PC-9 (cell line): ENCODE measurements at regions of chr12 and their contacts with region 1.

Region 1: GRCh38 chr12:80001264-80001961 is 66.5 kb upstream of the PPP1R12A start:
- DNase-seq: peak; percentile 64 to 66
- H3K4me3 ChIP-seq: 0 out of 2 replicates have a peak overlapping the region, but pooled peaks have one; percentile 4
- H3K27ac ChIP-seq: no peak overlapping the region
- H3K4me1 ChIP-seq: peaks cover 21% of the 10 kb centered on the region
- H3K27me3 ChIP-seq: no peaks in the 10 kb centered on the region
- CTCF ChIP-seq: no peak

Region 2: DNA sequence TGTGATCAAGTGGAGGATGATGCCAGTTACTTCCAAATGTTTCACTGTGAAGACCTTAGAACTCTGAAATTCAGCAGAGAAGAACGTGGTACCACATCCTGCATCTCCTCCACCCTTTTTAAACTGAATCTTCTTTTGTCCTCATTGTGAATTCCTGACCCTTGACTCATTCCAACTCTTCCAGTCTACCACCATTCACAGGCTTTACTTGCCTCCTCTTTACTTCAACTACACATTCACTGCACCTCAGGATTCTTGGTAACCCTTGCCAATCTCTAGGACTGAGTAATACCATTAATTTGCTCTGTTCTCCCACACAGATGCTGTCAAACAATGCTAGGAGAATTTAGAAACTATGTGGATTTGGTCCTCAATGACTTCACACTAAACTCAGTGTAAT is 103.8 kb before region 1 on chr12:
- CTCF ChIA-PET with region 1: no interaction called
- POLR2A ChIA-PET with region 1: no interaction called
- intact Hi-C with region 1: no loop called
- DNase-seq: peak; percentile 18 to 35
- H3K4me3 ChIP-seq: no peak overlapping the region
- H3K27ac ChIP-seq: no peak overlapping the region
- H3K4me1 ChIP-seq: no peaks in the 10 kb centered on the region
- H3K27me3 ChIP-seq: no peaks in the 10 kb centered on the region
- CTCF ChIP-seq: no peak

Region 3: DNA sequence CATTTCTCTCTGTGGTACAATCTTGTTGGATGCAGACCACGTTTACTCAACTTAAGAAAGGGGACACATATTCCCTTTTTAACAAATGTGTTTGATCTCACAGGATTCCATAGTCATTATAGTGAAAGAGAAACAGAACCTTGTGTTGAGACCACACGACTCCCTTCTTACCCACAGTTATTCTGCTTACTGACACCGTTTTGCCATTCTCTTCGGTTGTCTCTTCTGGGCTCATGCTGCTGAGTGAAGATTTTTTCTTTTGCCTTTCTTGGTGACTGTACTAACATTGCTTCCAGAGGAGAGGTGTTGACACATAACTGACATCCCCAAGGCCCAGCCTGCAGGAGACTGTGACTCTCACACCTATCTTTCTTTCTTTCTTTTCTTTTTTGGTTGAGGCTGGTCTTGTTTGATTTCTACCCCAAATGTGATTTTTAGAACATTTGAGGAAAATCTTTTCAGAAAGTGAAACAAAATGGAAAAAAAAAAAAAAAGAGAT is 36.7 kb after region 1 on chr12:
- CTCF ChIA-PET with region 1: no interaction called
- POLR2A ChIA-PET with region 1: no interaction called
- intact Hi-C with region 1: loop called (anchors 5 kb)
- DNase-seq: no peak
- H3K4me3 ChIP-seq: no peak overlapping the region
- H3K27ac ChIP-seq: no peak overlapping the region
- H3K4me1 ChIP-seq: 0 out of 2 replicates have a peak, but pooled peaks cover 4% of the 10 kb centered on the region
- H3K27me3 ChIP-seq: no peaks in the 10 kb centered on the region
- CTCF ChIP-seq: no peak